Mammary epithelial cell (primary cell): ENCODE measurements at regions of chr1 and their contacts with region 1.

Region 1: DNA sequence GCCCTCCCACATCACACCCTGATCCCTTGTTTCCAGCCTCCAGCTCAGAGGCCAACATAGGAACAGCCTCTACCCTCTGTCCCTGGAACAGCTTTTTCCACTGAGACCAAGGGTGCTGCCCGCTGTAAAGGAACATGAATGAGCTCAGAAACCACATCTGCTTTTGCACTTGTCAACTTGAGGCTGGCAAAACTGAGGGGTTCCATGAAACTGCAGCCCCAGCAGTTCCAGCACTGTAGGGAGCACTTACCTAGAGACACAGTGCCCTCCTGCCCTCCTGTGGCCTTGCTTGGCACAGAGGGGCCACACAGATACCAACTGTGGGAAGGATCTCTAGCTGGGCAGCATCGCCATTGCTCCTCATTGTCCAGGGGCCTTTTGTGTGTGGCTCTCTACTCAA is 51.7 kb downstream of the ITPKB start:
- DNase-seq: no peak
- H3K4me3 ChIP-seq: no peak overlapping the region
- H3K27ac ChIP-seq: no peak overlapping the region
- H3K4me1 ChIP-seq: peaks cover 10% of the 10 kb centered on the region
- H3K27me3 ChIP-seq: no peaks in the 10 kb centered on the region
- CTCF ChIP-seq: peak in 1 of 2 donors; percentile 31

Region 2: DNA sequence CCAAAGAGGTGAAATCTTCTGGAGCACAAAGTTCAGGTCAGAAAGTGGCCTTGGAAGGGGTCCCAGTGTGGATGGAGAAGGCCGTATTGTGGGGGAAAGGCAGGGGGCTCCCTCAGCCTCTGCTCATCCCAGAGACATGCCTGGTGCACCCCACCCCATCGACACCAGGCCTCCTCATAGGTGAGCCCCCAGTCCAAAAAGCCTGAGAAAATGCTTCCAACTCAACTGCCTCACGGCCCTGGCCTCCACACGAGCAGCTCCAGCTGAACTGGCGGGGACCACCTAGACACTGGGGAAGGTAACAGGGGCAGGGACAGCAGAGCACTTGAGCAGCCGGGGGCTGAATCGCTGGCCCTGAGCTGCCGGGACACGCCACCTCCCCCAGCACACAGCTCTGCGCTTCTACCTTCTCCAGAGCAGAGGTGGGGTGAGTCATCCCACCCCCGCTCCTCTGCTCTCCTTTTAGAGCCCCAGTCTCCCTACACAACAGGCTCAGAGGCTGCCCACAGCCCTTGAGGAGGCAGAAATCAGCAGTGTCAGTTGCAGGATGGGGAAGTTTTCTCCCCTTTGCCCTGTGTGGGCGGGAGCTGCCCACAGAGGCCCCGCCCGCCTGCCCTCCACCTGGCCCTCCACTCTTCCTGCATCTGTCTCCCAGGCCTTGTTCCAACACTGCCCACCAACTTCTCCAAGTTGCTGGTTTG is 44.4 kb before region 1 on chr1:
- CTCF ChIA-PET with region 1: no interaction called
- dilution Hi-C with region 1: no loop called
- in situ Hi-C with region 1: no loop called
- intact Hi-C with region 1: loop called (anchors 5 kb)
- DNase-seq: peak; percentile 87
- H3K4me3 ChIP-seq: no peak overlapping the region
- H3K27ac ChIP-seq: no peak overlapping the region
- H3K4me1 ChIP-seq: peaks cover 17% of the 10 kb centered on the region
- H3K27me3 ChIP-seq: no peaks in the 10 kb centered on the region
- CTCF ChIP-seq: no peak

Region 3: DNA sequence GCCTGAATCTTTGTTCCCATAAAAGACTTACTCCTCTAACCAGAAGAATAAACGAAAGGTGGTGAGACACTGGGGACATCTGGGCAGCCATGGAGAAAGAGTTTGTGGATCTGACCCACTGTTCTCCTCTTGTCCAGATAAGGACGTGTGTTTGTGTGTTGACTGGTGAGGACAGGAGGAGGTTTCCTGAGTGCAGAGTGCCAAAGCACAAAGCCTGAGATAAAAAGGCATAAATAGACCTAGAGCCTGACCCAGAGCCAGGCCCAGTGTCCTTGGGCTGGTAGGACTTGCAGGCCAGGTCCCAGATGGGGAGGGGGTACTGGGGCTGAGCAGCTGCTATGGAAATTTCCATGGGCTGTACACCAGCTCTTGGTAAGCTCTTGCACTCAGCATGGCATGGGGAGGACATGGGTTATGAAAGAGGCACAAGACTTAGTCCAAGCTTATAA is 233.0 kb after region 1 on chr1:
- CTCF ChIA-PET with region 1: no interaction called
- dilution Hi-C with region 1: no loop called
- in situ Hi-C with region 1: no loop called
- intact Hi-C with region 1: no loop called
- DNase-seq: no peak
- H3K4me3 ChIP-seq: no peak overlapping the region
- H3K27ac ChIP-seq: no peak overlapping the region
- H3K4me1 ChIP-seq: no peaks in the 10 kb centered on the region
- H3K27me3 ChIP-seq: no peaks in the 10 kb centered on the region
- CTCF ChIP-seq: no peak

Region 4: DNA sequence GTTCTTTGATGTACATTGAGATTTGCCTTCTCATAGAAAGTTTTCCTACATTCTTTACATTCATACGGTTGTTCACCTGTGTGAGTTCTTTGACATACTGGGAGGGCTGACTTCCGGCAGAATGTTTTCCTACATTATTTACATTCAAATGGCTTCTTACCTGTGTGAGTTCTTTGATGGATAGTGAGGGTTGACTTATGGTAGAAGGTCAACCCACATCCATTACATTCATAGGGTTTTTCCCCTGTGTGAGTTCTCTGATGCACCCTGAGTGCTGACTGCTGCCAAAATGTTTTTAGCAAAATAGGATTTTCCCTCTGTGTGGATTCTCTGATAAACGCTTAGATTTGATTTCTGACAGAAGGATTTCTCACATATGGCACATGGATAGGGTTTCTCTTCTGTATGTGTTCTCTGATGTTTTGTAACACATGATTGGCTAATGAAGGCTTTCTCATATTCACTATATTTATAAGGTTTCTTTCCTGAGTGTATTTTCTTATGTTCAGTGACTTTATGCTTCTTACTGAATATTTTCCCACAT is 1010.0 kb after region 1 on chr1:
- CTCF ChIA-PET with region 1: no interaction called
- dilution Hi-C with region 1: no loop called
- in situ Hi-C with region 1: no loop called
- intact Hi-C with region 1: no loop called
- DNase-seq: no peak
- H3K4me3 ChIP-seq: no peak overlapping the region
- H3K27ac ChIP-seq: no peak overlapping the region
- H3K4me1 ChIP-seq: no peaks in the 10 kb centered on the region
- H3K27me3 ChIP-seq: no peaks in the 10 kb centered on the region
- CTCF ChIP-seq: no peak